Calu3 (cell line): ENCODE measurements at regions of chr7 and their contacts with region 1.

Region 1: GRCh38 chr7:91752102-91752501 is 128.4 kb downstream of the MTERF1 start:
- DNase-seq: no peak
- H3K4me3 Mint-ChIP-seq: no peak overlapping the region
- H3K27ac Mint-ChIP-seq: no peak overlapping the region
- H3K4me1 Mint-ChIP-seq: no peaks in the 10 kb centered on the region
- H3K27me3 Mint-ChIP-seq: no peaks in the 10 kb centered on the region
- CTCF ChIP-seq: no peak

Region 2: GRCh38 chr7:91731976-91732375 is 20.1 kb before region 1 on chr7:
- CTCF ChIA-PET with region 1: interaction called, 10 read pairs
- intact Hi-C with region 1: no loop called
- DNase-seq: no peak
- H3K4me3 Mint-ChIP-seq: no peak overlapping the region
- H3K27ac Mint-ChIP-seq: no peak overlapping the region
- H3K4me1 Mint-ChIP-seq: no peaks in the 10 kb centered on the region
- H3K27me3 Mint-ChIP-seq: no peaks in the 10 kb centered on the region
- CTCF ChIP-seq: no peak

Region 3: DNA sequence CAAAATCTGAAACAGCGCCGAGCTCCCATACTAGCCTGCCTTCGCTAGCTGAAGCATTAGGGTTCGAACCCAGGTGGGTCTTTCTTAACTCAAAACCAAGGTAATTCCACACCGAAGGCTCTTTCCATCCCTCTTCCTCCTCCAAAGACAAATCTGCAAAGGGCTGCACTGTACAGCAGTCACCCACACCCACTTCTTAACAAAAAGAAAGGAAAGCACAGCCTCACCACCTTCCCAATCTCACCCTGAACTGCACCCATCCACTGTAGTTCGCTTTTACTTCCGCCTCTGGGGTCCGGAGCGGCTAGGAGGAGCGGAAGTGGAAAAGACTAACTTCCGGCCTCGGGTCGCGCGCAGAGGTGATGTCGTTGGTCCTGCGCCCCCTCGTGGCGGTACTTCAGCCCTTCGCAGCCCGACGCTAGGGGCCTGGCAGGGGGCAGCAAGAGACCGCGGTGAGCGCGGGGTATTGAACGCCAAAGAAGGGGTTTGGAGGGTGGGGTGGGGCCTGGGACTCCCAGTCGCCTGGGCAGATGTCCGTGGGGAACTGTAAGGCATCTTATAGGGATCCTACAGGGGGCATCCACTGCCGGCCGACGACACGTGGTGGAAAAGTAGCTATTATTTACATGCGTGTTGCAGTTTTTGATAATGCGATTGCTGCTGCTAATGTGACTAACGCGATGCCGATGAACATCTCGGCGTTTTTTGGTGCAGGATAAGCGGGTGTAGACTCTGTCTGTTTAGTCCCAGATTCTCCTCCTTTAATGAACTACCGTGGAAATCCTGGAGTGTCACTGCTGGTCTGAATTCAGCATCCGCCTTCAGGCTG is 128.5 kb after region 1 on chr7 and contains the start of gene MTERF1:
- CTCF ChIA-PET with region 1: no interaction called
- intact Hi-C with region 1: no loop called
- DNase-seq: peak; percentile 89
- H3K4me3 Mint-ChIP-seq: peak within 1 kb of the TSS; percentile 91
- H3K27ac Mint-ChIP-seq: peak within 1 kb of the TSS; percentile 93
- H3K4me1 Mint-ChIP-seq: peaks cover 21% of the 10 kb centered on the region
- H3K27me3 Mint-ChIP-seq: no peaks in the 10 kb centered on the region
- CTCF ChIP-seq: peak; percentile 89
- total RNA-seq, gene MTERF1: 11.5 and 15.8 TPM in 2 replicates